ENCODE measurements at regions of chr14 and their contacts with region 1.

Region 1: GRCh38 chr14:74612350-74613021 is 449 bp upstream of the LTBP2 start:
- DNase-seq: peak; percentile 79 to 89 (median 85)
- H3K4me3 ChIP-seq: peak overlapping the region; percentile 63
- H3K4me3 Mint-ChIP-seq: peak overlapping the region; percentile 40 to 89 (median 77)
- H3K27ac ChIP-seq: peak overlapping the region; percentile 21
- H3K27ac Mint-ChIP-seq: no peak overlapping the region
- H3K4me1 ChIP-seq: peaks cover 11% of the 10 kb centered on the region
- H3K4me1 Mint-ChIP-seq: peaks cover 47 to 62% (median 50%) of the 10 kb centered on the region in 3 donors
- H3K27me3 ChIP-seq: no peaks in the 10 kb centered on the region
- H3K27me3 Mint-ChIP-seq: peaks cover 0 to 8% of the 10 kb centered on the region in 2 donors

Region 2: GRCh38 chr14:74573421-74574089 is 38.9 kb before region 1 on chr14:
- CTCF ChIA-PET with region 1: interaction called, 11 read pairs
- POLR2A ChIA-PET with region 1: no interaction called
- DNase-seq: no peak
- H3K4me3 ChIP-seq: no peak overlapping the region
- H3K4me3 Mint-ChIP-seq: peak overlapping the region in 6 of 7 donors; percentile 3 to 68 (median 25)
- H3K27ac ChIP-seq: no peak overlapping the region
- H3K27ac Mint-ChIP-seq: peak overlapping the region in 4 of 8 donors; percentile 2 to 34 (median 20)
- H3K4me1 ChIP-seq: peaks cover 39% of the 10 kb centered on the region
- H3K4me1 Mint-ChIP-seq: peaks cover 38 to 43% (median 38%) of the 10 kb centered on the region in 3 donors
- H3K27me3 ChIP-seq: peaks cover 28% of the 10 kb centered on the region
- H3K27me3 Mint-ChIP-seq: peaks cover 25 to 28% of the 10 kb centered on the region in 2 donors

Region 3: DNA sequence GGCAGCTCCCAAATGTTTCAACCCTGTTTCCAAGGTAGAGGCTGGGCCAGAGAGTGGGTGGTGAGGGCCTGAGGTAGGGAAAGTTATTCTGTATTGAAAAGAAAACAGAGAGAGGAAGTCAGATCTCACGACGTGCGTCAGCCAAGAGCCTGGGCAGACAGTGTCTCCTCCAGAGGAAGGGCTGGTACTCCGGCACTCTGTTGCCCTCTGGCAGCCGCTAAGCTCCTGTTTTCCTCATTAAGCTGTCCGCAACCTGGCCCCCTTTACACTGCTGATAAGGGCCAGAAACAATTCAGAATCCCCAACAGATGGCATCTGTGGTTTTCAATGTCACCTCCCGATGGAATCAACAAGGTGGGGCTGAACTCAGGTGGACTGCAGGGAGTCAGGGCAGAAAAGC is 25.6 kb after region 1 on chr14:
- CTCF ChIA-PET with region 1: interaction called, 16 read pairs
- POLR2A ChIA-PET with region 1: interaction called, 3 read pairs
- DNase-seq: no peak
- H3K4me3 ChIP-seq: no peak overlapping the region
- H3K4me3 Mint-ChIP-seq: no peak overlapping the region
- H3K27ac ChIP-seq: no peak overlapping the region
- H3K27ac Mint-ChIP-seq: peak overlapping the region in 5 of 8 donors; percentile 17 to 90 (median 69)
- H3K4me1 ChIP-seq: no peaks in the 10 kb centered on the region
- H3K4me1 Mint-ChIP-seq: peaks cover 0 to 7% (median 1%) of the 10 kb centered on the region in 3 donors
- H3K27me3 ChIP-seq: no peaks in the 10 kb centered on the region
- H3K27me3 Mint-ChIP-seq: peaks cover 0 to 7% of the 10 kb centered on the region in 2 donors

Region 4: GRCh38 chr14:74705613-74706500 is 93.4 kb after region 1 on chr14:
- CTCF ChIA-PET with region 1: interaction called, 12 read pairs
- POLR2A ChIA-PET with region 1: no interaction called
- DNase-seq: no peak
- H3K4me3 ChIP-seq: no peak overlapping the region
- H3K4me3 Mint-ChIP-seq: no peak overlapping the region
- H3K27ac ChIP-seq: no peak overlapping the region
- H3K27ac Mint-ChIP-seq: no peak overlapping the region
- H3K4me1 ChIP-seq: peaks cover 4% of the 10 kb centered on the region
- H3K4me1 Mint-ChIP-seq: peaks cover 43 to 71% (median 71%) of the 10 kb centered on the region in 3 donors
- H3K27me3 ChIP-seq: no peaks in the 10 kb centered on the region
- H3K27me3 Mint-ChIP-seq: no peaks in the 10 kb centered on the region

Region 5: DNA sequence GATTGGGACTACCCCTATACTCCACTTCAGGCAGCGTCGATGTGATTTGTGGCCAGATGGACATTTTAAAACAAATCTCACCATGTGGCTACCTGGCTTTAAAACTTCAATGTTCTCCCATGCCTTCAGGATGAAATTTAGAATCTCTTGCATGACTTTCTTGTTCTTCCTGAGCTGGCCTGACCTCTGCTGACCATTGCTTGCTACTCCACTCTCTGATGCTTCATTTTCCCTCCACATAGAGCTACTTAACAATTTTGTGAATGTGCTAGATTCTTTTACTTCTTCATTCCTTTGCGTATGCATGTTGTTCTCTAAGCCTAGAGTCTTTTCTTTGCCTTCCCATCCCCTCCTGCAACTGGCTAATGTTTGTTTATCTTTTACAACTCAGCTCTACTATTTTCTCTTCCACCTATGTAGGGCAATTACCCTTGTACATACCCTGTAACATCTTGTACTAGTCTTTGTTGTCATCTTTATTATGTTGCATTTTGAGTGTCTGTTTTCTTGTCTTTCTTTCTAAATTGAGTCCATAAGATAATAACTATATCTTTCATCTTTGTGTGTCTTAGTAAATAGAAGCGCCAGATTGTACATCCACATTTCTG is 191.8 kb after region 1 on chr14:
- CTCF ChIA-PET with region 1: interaction called, 12 read pairs
- POLR2A ChIA-PET with region 1: interaction called, 5 read pairs
- DNase-seq: peak in 3 of 5 donors; percentile 10 to 48 (median 17)
- H3K4me3 ChIP-seq: no peak overlapping the region
- H3K4me3 Mint-ChIP-seq: no peak overlapping the region
- H3K27ac ChIP-seq: no peak overlapping the region
- H3K27ac Mint-ChIP-seq: peak overlapping the region in 3 of 8 donors; percentile 9 to 52 (median 10)
- H3K4me1 ChIP-seq: no peaks in the 10 kb centered on the region
- H3K4me1 Mint-ChIP-seq: peaks cover 10 to 18% (median 13%) of the 10 kb centered on the region in 3 donors
- H3K27me3 ChIP-seq: no peaks in the 10 kb centered on the region
- H3K27me3 Mint-ChIP-seq: no peaks in the 10 kb centered on the region

Region 6: DNA sequence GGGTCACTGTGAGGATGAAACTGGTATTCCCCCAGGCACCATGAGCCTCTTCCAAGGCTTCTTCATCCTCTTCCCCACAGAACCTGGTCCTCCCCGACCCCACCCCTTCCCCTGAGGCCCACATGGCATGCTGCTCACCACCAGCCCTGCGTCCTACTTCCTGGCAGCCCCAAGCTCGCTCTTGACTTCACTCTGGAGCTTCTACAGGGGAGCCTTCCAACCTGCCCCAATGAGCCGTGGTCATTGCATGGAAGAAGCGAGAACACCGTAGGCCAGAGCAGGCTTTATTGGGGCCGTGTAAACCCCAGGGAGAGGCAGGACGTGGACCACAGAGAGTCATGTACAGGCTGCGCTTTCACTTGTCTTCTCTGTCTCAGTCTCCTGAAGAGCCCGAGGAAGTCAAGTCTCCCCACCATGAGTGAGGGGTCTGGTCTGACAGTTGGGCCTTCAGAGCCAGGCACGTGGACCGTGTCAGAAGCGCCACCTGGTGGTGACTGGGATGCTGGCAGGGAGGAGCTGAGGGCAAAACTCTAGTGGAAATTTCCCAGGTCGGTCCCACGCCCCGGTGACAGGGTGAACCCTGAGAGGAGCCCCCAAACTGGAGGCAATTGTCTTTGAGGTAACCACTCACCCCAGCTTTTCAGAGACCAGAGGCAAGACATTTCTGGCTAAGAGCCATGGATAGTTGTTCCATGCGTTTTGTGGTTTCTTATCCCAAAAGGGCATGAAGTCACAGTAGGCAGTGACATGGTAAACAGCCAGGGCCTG is 293.1 kb after region 1 on chr14:
- CTCF ChIA-PET with region 1: interaction called, 12 read pairs
- POLR2A ChIA-PET with region 1: interaction called, 3 read pairs
- DNase-seq: peak; percentile 61 to 85 (median 71)
- H3K4me3 ChIP-seq: no peak overlapping the region
- H3K4me3 Mint-ChIP-seq: no peak overlapping the region
- H3K27ac ChIP-seq: no peak overlapping the region
- H3K27ac Mint-ChIP-seq: peak overlapping the region; percentile 19 to 90 (median 73)
- H3K4me1 ChIP-seq: no peaks in the 10 kb centered on the region
- H3K4me1 Mint-ChIP-seq: peaks cover 5 to 9% (median 8%) of the 10 kb centered on the region in 3 donors
- H3K27me3 ChIP-seq: no peaks in the 10 kb centered on the region
- H3K27me3 Mint-ChIP-seq: no peaks in the 10 kb centered on the region